ENCODE measurements at regions of chr4 and their contacts with region 1.

Region 1: DNA sequence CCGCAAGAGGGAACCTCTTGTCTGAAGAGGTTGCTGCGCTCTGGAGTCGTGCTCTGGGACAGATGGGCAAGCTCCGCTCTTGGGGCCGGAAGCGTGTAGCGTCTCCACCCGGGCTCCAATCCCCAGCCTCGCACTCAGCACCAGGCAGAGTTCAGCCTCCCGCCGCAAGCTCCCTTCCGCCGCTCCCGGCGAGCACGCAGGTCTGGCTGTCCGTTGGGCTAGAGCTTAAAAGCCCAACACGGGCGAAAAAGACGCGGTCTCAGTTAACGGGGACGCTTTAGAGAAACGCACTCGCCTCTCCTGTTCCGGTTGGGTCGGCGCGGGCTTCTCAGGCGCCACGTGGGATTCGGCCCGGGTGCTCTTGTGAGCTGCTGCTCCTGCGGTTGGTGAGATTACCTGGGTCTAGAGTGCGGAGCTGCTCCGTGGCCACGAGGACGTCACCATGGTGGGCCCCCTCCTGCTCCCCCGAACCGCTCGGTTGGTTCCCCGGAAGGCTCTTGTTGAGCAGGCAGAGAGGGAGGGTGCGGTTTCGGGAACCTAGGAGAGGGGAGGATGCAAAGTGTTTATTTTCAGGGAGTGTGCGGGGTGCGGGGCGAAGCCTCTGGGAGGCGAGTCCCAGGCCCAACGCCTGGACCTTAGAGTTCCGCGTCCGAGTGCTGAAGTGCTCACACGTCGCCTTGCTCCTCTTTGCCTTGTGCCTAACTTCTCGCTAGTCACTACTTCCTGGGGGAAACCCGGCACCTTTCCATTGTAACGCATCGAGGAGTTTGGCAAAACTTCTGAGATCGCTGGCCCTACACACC is at the start of gene TMA16:
- DNase-seq: peak; percentile 77 to 88 (median 82)
- H3K4me3 ChIP-seq: peak within 1 kb of the TSS; percentile 65
- H3K27ac ChIP-seq: peak within 1 kb of the TSS; percentile 81
- H3K4me1 ChIP-seq: no peaks in the 10 kb centered on the region
- H3K27me3 ChIP-seq: no peaks in the 10 kb centered on the region
- CTCF ChIP-seq: no peak
- EP300 ChIP-seq: no peak
- POLR2A ChIP-seq: peak; percentile 29
- total RNA-seq, gene TMA16: 16.1 to 31.9 (median 22.6) TPM

Region 2: GRCh38 chr4:163332500-163333406 is 161.8 kb before region 1 on chr4 and contains the start of gene NPY1R:
- intact Hi-C with region 1: loop called in 1 of 4 experiments (anchors 10 kb)
- DNase-seq: peak; percentile 18 to 61 (median 51)
- H3K4me3 ChIP-seq: peak within 1 kb of the TSS; percentile 47
- H3K27ac ChIP-seq: no peak within 1 kb of the TSS
- H3K4me1 ChIP-seq: peaks cover 8% of the 10 kb centered on the region
- H3K27me3 ChIP-seq: no peaks in the 10 kb centered on the region
- CTCF ChIP-seq: no peak
- EP300 ChIP-seq: no peak
- POLR2A ChIP-seq: no peak
- total RNA-seq, gene NPY1R: 1.2 to 26.2 (median 1.8) TPM

Measured in ovary (tissue), 10 donors.